ENCODE measurements at regions of chr16 and their contacts with region 1.

Region 1: DNA sequence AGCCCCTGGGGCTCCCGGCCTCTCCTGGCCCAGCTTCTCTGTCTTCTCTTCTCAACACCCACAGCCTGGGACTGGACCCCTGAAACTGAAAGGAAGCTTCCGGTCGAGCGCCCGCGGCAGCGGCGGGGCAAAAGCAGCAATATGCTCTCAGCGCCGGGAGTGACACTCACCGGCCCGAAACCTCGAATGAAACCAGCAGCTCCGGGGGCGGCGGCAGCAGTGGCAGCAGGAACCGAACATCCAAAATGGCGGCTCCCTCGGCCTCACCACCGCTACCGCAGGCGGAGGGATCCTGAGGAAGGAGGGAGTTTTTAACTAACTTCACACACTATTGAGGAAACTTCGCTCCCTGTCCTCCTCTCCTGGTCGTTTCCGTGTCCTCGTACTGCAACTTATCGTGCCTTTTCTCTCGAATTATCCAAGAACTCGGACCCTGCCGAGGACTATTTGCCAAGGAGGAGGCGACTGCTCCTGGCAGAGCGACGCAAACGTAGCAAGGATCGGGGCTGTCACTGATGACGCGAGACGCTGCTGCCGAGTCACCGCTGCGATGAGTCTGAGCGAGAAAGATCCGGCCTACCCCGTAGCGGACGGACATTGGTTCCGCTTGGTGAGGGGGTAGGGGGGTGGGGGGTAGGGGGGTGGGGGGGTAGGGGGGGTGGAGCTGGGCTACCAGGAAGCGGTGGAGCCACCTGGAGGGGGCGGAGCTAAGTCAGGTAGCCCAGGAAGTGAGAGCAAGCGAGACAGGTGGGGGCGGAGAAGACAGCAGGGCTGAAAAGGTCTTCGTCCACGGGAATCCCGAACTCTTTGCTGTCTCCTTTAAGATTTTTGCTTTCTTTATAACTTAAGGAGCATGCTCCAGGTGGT is at the start of gene AP1G1:
- DNase-seq: peak; percentile 93 to 97 (median 94)
- ATAC-seq: peak; percentile 96
- H3K4me3 ChIP-seq: peak within 1 kb of the TSS; percentile 94
- H3K4me1 ChIP-seq: peaks cover 14% of the 10 kb centered on the region
- CTCF ChIP-seq: no peak
- total RNA-seq, gene AP1G1: 82.9 to 108 (median 96.7) TPM

Region 2: GRCh38 chr16:71894921-71895678 is 86.3 kb after region 1 on chr16 and contains the start of gene IST1:
- intact Hi-C with region 1: loop called in 1 of 2 experiments (anchors 5 kb)
- DNase-seq: peak; percentile 98 to 99 (median 98)
- ATAC-seq: peak; percentile 94
- H3K4me3 ChIP-seq: peak within 1 kb of the TSS; percentile 97
- H3K4me1 ChIP-seq: peaks cover 37% of the 10 kb centered on the region
- CTCF ChIP-seq: no peak
- total RNA-seq, gene IST1: 223 to 278 (median 228) TPM